Activated B cell treated with CpG ODN at 0.5 μM for 24 hours (primary cell): ENCODE measurements at regions of chr10 and their contacts with region 1.

Region 1: DNA sequence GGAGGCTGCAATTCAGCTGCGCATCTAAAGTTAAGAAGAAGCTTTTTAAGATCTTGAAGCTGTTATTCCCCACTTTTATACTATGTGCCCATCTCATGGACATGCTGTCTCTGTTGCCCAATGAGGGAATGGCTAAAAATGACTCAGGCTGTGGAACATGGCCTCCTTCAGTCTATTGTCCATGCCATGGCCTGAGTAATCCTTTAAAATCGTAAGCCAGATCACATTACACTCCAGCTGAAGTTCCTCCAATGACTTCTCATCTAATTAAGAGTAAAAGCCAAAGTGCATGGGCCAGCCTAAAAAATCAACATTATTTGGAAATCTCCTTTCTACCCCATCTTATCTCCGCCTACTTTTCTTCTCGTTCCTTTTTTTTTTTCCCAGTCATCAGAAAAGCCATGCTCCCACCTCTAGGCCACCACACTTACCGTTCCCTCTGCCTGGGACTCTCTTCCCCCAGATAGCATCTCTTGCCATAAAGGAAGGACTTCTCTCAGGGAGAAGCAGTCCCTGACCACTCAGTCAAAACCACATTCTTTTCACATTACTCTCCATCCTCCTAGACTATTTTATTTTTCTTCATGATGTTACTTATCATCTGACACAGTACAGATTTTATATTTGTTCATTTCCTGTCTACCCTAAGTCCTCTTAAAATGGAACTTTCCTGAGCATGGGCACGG is 337.4 kb downstream of the PRPF18 start:
- DNase-seq: no peak
- ATAC-seq: no peak
- H3K4me3 Mint-ChIP-seq: no peak overlapping the region
- H3K27ac Mint-ChIP-seq: no peak overlapping the region
- H3K4me1 Mint-ChIP-seq: peaks cover 25% of the 10 kb centered on the region
- H3K27me3 Mint-ChIP-seq: peaks cover 6% of the 10 kb centered on the region
- CTCF ChIP-seq: no peak

Region 2: GRCh38 chr10:13877154-13877909 is 46.9 kb before region 1 on chr10:
- CTCF ChIA-PET with region 1: no interaction called
- POLR2A ChIA-PET with region 1: no interaction called
- intact Hi-C with region 1: loop called (anchors 1 kb)
- DNase-seq: no peak
- ATAC-seq: no peak
- H3K4me3 Mint-ChIP-seq: no peak overlapping the region
- H3K27ac Mint-ChIP-seq: no peak overlapping the region
- H3K4me1 Mint-ChIP-seq: peaks cover 31% of the 10 kb centered on the region
- H3K27me3 Mint-ChIP-seq: no peaks in the 10 kb centered on the region
- CTCF ChIP-seq: no peak

Region 3: GRCh38 chr10:13904064-13904463 is 20.1 kb before region 1 on chr10:
- CTCF ChIA-PET with region 1: no interaction called
- POLR2A ChIA-PET with region 1: no interaction called
- intact Hi-C with region 1: no loop called
- DNase-seq: no peak
- ATAC-seq: no peak
- H3K4me3 Mint-ChIP-seq: no peak overlapping the region
- H3K27ac Mint-ChIP-seq: no peak overlapping the region
- H3K4me1 Mint-ChIP-seq: peaks cover 8% of the 10 kb centered on the region
- H3K27me3 Mint-ChIP-seq: peaks cover 3% of the 10 kb centered on the region
- CTCF ChIP-seq: no peak

Region 4: DNA sequence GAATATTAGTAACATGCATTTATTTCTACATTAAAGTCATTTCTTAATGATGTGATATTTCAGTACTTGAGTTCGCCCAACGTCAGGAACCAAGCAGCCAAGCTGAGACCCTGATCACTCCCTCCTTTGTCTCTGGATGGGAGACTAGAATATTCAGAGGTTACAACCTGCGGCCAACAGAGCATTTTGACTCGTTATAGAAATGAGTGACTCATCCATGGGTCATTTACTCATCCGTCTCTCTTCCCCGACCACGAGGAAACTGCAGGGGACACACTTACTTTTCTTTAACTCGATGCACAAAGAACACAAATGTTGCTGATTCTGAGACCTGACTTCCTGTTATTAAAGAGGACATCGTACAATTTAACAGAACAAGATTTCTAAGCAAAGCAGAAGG is 63.3 kb after region 1 on chr10:
- CTCF ChIA-PET with region 1: no interaction called
- POLR2A ChIA-PET with region 1: no interaction called
- intact Hi-C with region 1: loop called (anchors 5 kb)
- DNase-seq: no peak
- ATAC-seq: no peak
- H3K4me3 Mint-ChIP-seq: no peak overlapping the region
- H3K27ac Mint-ChIP-seq: no peak overlapping the region
- H3K4me1 Mint-ChIP-seq: peaks cover 15% of the 10 kb centered on the region
- H3K27me3 Mint-ChIP-seq: peaks cover 2% of the 10 kb centered on the region
- CTCF ChIP-seq: no peak

Region 5: DNA sequence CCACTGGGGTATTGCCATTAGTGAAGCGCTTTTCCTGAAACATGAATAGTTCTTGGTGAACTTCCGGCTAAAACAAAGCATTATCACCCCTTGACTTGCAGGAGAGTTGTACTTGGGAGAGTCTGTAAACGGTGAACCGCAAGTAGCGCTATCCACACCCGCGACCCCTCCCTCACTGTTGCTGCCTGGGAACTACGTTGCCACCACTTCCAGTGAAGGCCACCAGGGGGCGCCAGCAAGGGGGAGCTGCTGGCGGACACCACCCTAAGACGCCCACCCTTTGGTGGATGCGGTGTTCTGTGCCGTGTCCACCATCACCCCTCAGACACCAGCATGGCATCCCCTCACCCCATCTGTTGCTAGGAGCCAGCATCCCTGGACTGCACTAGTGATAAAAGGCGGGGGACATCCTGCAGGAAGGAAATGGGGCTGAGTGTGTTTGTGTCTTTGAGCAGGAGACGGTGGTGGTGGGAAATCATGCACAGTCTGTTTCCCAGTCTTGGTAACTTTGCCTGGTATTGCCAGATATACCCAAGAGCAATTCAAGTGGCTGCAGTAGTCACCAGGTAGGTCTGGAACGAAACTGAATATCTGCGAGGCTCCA is 108.3 kb after region 1 on chr10:
- CTCF ChIA-PET with region 1: no interaction called
- POLR2A ChIA-PET with region 1: interaction called, 11 read pairs
- intact Hi-C with region 1: no loop called
- DNase-seq: peak; percentile 23
- ATAC-seq: no peak
- H3K4me3 Mint-ChIP-seq: no peak overlapping the region
- H3K27ac Mint-ChIP-seq: no peak overlapping the region
- H3K4me1 Mint-ChIP-seq: peaks cover 5% of the 10 kb centered on the region
- H3K27me3 Mint-ChIP-seq: peaks cover 28% of the 10 kb centered on the region
- CTCF ChIP-seq: no peak

Region 6: DNA sequence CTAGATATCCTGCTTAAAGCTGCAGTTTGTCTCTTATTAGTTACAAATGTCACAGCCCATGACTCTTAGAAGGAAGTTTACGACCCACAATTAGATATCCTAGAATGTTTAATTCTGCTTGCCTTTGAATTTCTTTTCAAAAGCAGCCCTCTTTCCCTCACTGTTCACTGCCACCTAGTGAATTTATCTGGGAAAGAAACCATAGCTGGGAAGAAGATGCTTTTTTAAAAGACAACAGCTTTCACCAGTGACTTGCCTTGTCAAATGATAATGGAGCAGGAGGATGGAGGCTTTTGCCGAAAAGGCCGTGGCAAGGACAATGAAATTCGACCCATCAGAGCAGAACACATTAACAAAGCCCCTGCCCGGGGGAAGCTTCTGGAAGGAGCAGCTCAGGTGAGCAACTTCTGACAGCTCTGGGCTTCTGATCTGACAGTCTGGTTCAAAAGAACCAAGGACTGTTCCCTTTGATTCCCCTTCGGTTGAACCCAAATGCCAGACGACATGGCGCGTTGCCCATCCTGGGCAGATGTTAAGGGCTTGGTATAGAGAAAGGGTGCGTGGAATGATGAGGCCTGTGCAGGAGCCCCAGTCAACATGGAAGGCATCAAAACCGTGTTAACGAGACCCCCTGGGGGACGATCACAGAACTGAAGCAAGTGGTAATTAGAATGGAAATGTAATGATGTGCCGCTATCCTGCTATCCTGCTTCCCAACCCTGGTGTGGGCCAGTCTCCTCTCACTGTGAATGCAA is 169.7 kb after region 1 on chr10:
- CTCF ChIA-PET with region 1: no interaction called
- POLR2A ChIA-PET with region 1: no interaction called
- intact Hi-C with region 1: no loop called
- DNase-seq: no peak
- ATAC-seq: no peak
- H3K4me3 Mint-ChIP-seq: no peak overlapping the region
- H3K27ac Mint-ChIP-seq: no peak overlapping the region
- H3K4me1 Mint-ChIP-seq: no peaks in the 10 kb centered on the region
- H3K27me3 Mint-ChIP-seq: peaks cover 4% of the 10 kb centered on the region
- CTCF ChIP-seq: no peak